AG04449 (cell line): ENCODE measurements at regions of chr13 and their contacts with region 1.

Region 1: DNA sequence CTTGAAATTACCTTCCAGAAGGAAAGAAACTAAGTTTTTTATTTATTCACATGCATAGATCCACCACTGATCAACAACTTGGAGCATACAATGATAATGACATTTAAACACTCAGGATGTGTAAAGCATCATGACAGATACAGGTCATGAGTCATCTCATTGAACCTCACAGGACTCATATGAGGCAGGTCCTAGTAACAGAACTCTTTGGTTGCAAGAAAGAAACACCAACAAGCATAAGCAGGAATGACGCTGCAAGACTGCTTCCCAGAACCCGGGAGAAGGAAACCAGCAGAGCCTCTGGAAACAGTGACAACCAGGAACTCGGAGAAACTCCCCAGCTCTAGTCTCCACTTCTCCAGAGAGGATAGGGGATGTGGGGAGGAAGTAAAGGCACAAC is 60.8 kb upstream of the IPO5 start:
- DNase-seq: no peak
- H3K4me3 ChIP-seq: no peak overlapping the region
- CTCF ChIP-seq: no peak

Region 2: DNA sequence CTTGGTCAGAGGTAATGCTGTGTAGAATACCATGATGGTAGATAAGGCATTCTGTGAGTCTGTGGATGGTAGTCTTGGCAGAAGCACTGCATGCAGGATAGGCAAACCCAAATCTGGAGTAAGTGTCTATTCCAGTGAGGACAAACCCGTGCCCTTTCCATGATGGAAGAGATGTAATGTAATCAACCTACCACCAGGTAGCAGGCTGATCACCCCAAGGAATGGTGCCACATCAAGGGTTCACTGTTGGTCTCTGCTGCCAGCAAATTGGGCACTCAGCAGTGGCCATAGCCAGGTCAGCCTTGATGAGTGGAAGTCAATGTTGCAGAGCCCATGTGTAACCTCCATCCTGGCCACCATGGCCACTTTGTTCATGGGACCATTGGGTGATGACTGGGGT is 303.7 kb before region 1 on chr13:
- CTCF ChIA-PET with region 1: no interaction called
- POLR2A ChIA-PET with region 1: no interaction called
- DNase-seq: no peak
- H3K4me3 ChIP-seq: no peak overlapping the region
- CTCF ChIP-seq: no peak

Region 3: GRCh38 chr13:97911311-97912128 is 18.8 kb after region 1 on chr13:
- CTCF ChIA-PET with region 1: interaction called, 13 read pairs
- POLR2A ChIA-PET with region 1: no interaction called
- DNase-seq: no peak
- H3K4me3 ChIP-seq: no peak overlapping the region
- CTCF ChIP-seq: peak; percentile 29

Region 4: DNA sequence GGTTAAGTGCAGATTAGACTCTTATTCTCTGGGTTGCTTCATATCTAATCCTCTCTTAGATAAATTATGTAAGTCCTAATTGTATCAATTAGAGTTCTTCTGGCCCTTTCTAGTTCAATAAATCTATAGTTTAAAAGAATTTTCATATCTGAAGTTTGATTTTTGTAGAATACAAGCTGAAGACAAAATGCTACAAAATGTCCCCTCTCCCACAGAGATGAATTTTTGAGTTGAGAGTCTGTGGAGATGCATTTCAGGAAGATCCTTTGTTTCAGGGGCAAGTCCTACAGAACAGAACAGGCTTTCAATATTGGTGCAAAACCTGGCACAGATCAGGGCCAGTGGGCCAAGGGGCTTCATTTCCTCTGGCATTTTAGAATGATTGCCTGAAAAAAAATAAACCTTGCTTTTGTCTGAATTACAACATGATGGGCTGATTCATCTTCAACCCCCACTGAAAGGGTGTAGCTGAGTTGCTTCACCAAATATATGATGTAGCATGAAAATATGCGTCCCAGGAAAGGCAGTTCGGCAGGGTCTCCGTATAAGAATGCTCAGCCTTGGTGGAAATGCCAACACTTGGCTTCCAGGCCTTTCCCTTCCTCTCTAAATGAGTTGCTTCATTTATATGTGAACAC is 54.4 kb after region 1 on chr13:
- CTCF ChIA-PET with region 1: no interaction called
- POLR2A ChIA-PET with region 1: no interaction called
- DNase-seq: peak; percentile 58
- H3K4me3 ChIP-seq: no peak overlapping the region
- CTCF ChIP-seq: no peak